ENCODE measurements at regions of chr1 and their contacts with region 1.

Region 1: DNA sequence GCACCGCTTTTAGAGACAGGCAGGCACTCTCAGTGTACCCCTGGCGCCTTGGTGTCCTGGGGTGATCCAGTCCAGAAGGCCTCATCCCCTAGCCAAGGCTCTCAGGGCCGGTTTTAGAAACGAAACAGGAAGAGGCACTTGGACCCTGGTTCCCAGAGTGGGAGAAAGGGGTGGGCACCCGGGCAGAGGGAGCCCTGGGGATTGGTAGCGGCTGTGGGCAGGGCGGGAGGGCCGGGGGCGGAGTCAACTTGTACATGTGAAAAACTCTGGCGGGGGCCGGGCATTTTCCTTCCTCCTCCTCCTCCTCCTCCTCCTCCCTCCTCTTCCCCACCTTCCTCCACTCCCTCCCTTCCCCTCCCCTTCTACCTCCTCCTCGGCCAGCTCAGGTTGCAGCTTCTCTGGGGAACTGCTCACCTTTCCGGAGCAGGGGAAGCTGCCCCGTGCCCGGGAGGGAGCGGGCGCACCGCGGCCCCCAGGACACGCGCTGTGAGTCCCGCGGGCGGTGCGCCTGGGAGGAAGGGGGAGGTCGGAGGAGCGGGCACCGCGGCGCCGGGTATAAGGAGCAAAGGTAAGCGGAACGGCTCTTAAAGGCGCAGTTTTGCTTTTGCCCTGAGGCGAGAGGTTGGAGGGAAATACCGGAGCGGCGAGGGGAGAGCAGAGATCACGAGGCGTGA is at the start of gene CDK18:
- DNase-seq: peak; percentile 91
- ATAC-seq: peak; percentile 83
- total RNA-seq, gene CDK18: 180 TPM

Region 2: DNA sequence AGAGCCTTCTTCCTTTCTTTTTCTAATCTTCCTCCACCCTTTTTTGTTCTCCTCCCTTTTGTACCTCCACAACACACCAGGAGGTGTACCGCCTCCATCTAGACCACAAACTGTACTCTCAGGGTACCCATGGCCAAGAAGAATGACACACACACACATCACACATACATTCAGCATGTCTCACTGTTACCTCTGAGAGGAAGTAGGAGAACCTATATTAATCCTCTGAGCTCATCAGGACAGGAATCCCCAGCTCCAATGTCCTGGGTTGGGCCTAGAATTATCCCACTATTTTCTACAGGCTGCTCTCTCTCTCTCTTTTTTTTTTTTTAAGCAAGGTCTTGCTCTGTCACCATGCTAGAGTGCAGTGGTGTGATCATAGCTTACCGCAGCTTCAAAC is 1841.2 kb before region 1 on chr1:
- intact Hi-C with region 1: loop called (anchors 10 kb)
- DNase-seq: no peak
- ATAC-seq: peak; percentile 8